Lower leg skin (tissue), 4 donors: ENCODE measurements at regions of chr15 and their contacts with region 1.

Region 1: DNA sequence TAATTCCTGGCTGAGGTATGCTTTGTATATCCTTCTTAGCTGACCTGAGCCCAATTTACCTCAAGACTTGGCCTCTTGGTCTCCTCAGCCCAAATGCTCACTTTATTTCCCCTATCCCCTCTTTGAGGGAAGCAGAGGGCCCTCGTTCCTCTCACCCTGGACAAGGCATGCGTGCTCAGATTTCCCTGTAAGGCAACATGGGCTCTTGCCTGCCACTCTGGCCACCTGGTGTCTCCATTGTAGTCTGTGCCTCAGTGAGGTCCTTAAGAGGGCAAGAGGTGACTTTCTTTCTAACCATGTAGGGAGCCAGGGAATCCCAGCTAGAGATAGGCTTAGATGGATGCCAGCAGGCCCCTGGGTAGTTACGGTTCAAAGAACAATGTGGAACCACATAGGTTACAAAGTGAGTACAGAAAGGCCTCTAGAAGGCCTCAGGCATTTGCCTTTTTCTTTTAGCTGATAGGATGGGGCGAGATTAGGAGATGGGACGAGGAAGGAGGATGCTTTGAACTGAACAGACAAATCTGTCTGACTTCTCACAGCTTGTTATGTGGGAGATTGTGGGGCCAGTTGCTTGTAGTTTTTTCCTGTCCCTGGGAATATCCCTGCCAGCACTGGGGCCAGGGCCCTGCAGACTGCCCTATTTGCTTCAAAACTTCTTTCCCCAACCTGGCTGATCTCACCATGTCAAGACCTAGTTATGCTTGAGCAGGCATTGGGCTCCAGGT is 1.1 kb upstream of the INTS14 start:
- DNase-seq: no peak
- H3K4me3 ChIP-seq: peak overlapping the region; percentile 20
- CTCF ChIP-seq: no peak
- POLR2A ChIP-seq: no peak

Region 2: GRCh38 chr15:65571971-65572370 is 40.1 kb before region 1 on chr15:
- intact Hi-C with region 1: loop called (anchors 1 kb)
- DNase-seq: no peak
- H3K4me3 ChIP-seq: no peak overlapping the region
- CTCF ChIP-seq: no peak
- POLR2A ChIP-seq: no peak